GM12878 (cell line): ENCODE measurements at regions of chr6 and their contacts with region 1.

Region 1: GRCh38 chr6:131688286-131688685 is 12.9 kb downstream of the OR2A4 start:
- DNase-seq: peak; percentile 23
- ATAC-seq: peak; percentile 69
- H3K4me3 ChIP-seq: no peak overlapping the region
- H3K27ac ChIP-seq: no peak overlapping the region
- H3K4me1 ChIP-seq: peaks cover 6% of the 10 kb centered on the region; the same call in 1 of the 2 replicates
- H3K27me3 ChIP-seq: no peaks in the 10 kb centered on the region; a peak in 1 of 4 replicates
- CTCF ChIP-seq: no peak
- EP300 ChIP-seq: no peak
- POLR2A ChIP-seq: no peak
- RAD21 ChIP-seq: no peak

Region 2: DNA sequence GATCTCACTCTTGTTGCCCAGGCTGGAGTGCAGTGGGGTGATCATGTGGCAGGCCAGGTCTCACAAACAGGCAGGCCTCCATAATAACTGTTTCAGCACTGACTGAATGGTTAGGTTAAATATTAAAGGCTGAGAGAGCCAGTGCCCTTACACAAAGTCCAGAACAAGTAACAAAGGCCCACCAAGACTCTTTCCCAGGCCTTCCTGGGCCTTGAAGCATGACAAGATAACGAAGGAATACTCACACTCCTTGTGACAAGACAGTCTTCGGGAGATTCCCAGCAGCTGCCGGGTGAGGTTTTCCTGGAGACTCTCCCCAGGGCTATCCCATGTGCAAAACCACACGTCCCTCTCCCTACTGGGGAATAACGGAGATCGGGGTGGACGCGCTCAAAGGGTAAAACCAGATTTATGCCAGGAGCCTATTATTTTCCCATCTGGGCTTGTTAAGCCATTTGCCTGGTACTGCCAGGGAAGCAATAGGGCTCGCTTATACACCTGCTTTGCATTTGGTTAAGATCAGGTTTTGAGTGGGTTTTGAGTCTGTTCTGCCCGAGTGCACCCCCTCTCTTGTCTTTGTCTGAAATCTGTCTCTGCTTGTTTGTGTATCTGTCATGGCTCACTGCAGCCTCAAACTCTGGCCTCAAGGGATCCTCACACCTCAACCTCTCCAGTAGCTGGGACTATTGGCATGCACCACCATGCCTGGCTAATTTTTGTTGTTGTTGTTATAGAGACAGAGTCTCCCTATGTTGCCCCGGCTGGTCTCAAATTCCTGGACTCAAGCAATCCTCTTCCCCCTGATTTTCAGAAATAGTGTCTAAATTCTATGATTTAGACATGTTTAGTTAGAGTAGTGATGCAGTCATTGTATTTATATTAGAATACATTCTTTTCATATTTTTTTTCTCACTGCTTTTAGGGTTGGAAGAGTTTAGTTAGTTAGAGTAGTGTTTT is 52.6 kb before region 1 on chr6:
- CTCF ChIA-PET with region 1: no interaction called
- POLR2A ChIA-PET with region 1: no interaction called
- RAD21 ChIA-PET with region 1: no interaction called
- SMC1A ChIA-PET with region 1: no interaction called
- in situ Hi-C with region 1: no loop called
- intact Hi-C with region 1: loop called (anchors 5 kb)
- DNase-seq: no peak
- ATAC-seq: peak; percentile 87
- H3K4me3 ChIP-seq: no peak overlapping the region
- H3K27ac ChIP-seq: no peak overlapping the region
- H3K4me1 ChIP-seq: no peaks in the 10 kb centered on the region; the same call in 1 of the 2 replicates
- H3K27me3 ChIP-seq: no peaks in the 10 kb centered on the region; a peak in 2 of 4 replicates
- CTCF ChIP-seq: no peak
- EP300 ChIP-seq: no peak
- POLR2A ChIP-seq: no peak
- RAD21 ChIP-seq: no peak

Region 3: GRCh38 chr6:131652472-131652871 is 35.8 kb before region 1 on chr6:
- CTCF ChIA-PET with region 1: no interaction called
- POLR2A ChIA-PET with region 1: no interaction called
- RAD21 ChIA-PET with region 1: no interaction called
- SMC1A ChIA-PET with region 1: no interaction called
- in situ Hi-C with region 1: no loop called
- intact Hi-C with region 1: no loop called
- DNase-seq: no peak
- ATAC-seq: no peak
- H3K4me3 ChIP-seq: no peak overlapping the region
- H3K27ac ChIP-seq: no peak overlapping the region
- H3K4me1 ChIP-seq: no peaks in the 10 kb centered on the region
- H3K27me3 ChIP-seq: no peaks in the 10 kb centered on the region
- CTCF ChIP-seq: no peak
- EP300 ChIP-seq: no peak
- POLR2A ChIP-seq: no peak
- RAD21 ChIP-seq: no peak

Region 4: GRCh38 chr6:131954775-131955591 is 266.7 kb after region 1 on chr6:
- CTCF ChIA-PET with region 1: no interaction called
- POLR2A ChIA-PET with region 1: no interaction called
- RAD21 ChIA-PET with region 1: no interaction called
- SMC1A ChIA-PET with region 1: no interaction called
- in situ Hi-C with region 1: no loop called
- intact Hi-C with region 1: no loop called
- DNase-seq: no peak
- ATAC-seq: no peak
- H3K4me3 ChIP-seq: no peak overlapping the region
- H3K27ac ChIP-seq: no peak overlapping the region
- H3K4me1 ChIP-seq: no peaks in the 10 kb centered on the region
- H3K27me3 ChIP-seq: peaks cover 0 to 5% of the 10 kb centered on the region in 2 experiments; a peak in 3 of 4 replicates
- CTCF ChIP-seq: no peak
- EP300 ChIP-seq: no peak
- POLR2A ChIP-seq: no peak
- RAD21 ChIP-seq: no peak